ENCODE measurements at regions of chr3 and their contacts with region 1.

Region 1: DNA sequence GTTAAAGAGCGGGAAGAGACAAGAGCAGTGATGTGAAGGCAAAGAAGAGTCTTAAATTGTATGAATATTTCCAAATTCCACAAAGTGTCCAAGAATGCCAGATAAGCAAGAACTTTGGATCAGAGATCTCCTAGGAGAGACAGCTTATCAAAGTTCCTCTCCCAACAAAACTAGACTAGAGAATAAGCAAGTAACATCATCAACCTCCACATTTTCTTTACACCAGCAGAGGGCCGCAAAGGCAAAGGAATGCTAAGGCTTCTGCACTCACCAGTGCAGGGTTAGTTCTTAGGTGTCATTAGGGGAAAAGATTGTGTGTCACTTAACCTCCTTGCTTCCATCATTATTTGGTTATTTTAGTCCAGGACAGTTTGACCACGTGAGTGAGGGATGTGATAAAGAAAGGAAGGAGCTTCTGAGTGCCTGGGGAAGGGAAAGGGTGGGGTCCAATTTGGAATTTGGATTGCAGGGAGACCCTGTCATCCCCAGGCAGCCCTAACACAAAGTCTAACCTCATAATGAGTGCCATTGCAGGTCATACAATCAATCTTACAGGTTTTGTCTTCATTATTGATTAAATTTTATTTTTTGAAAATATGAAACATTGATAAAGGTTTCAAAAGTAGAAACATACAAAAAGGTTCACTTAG is 7.5 kb upstream of the CMTM6 start:
- DNase-seq: peak; percentile 32
- H3K4me3 ChIP-seq: no peak overlapping the region
- H3K27ac ChIP-seq: no peak overlapping the region
- H3K27me3 ChIP-seq: no peaks in the 10 kb centered on the region
- CTCF ChIP-seq: peak; percentile 81

Region 2: GRCh38 chr3:32045091-32045964 is 464.9 kb before region 1 on chr3:
- CTCF ChIA-PET with region 1: no interaction called
- POLR2A ChIA-PET with region 1: no interaction called
- DNase-seq: peak; percentile 78
- H3K4me3 ChIP-seq: peak overlapping the region; percentile 24
- H3K27ac ChIP-seq: peak overlapping the region; percentile 81
- H3K27me3 ChIP-seq: peaks cover 3% of the 10 kb centered on the region
- CTCF ChIP-seq: peak; percentile 19; the same call in 1 of the 2 replicates

Region 3: GRCh38 chr3:32498252-32498651 is 11.9 kb before region 1 on chr3:
- CTCF ChIA-PET with region 1: interaction called, 11 read pairs
- POLR2A ChIA-PET with region 1: no interaction called
- DNase-seq: no peak
- H3K4me3 ChIP-seq: no peak overlapping the region
- H3K27ac ChIP-seq: no peak overlapping the region
- H3K27me3 ChIP-seq: no peaks in the 10 kb centered on the region
- CTCF ChIP-seq: no peak

Region 4: GRCh38 chr3:32522682-32523081 is 12.5 kb after region 1 on chr3:
- CTCF ChIA-PET with region 1: interaction called, 11 read pairs
- POLR2A ChIA-PET with region 1: interaction called, 4 read pairs
- DNase-seq: no peak
- H3K4me3 ChIP-seq: no peak overlapping the region
- H3K27ac ChIP-seq: no peak overlapping the region
- H3K27me3 ChIP-seq: no peaks in the 10 kb centered on the region
- CTCF ChIP-seq: no peak

Region 5: DNA sequence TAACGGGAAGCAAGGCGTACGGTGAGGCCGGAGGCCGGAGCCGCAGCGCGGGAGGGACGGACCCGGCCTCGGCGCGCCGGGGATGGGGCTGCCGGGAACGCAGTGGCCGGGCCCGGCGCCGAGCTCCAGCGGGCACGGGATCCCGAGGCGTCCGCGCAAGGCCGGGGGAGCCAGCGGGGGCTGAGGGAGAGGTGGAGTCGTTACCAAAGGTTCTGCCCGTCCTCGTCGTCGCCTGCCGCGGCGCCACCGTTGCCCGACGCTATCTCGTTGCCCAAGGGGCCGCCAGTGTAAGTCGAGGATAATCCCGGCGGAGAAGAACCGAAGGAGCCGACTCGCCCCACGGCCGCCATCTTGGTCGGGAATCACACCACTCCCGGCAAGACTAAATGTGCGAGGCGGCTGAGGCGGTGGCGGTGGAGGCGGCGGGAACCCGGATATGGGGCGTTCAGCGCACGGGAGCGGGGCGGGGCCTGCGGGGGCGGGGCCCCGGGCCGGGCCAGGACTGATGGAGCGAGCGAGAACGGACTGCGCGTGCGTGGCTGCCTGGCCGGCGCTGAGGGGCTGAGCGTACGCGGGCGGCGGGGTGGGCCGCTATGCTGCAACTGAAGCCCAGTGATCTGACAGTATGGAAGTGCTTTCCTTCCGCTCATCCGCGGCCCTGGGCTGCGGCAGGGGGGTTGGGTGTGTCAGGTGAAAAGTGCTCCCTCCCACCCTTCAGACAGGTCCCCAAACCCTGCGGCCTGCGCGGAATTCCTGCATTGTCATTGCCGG is 60.4 kb after region 1 on chr3 and contains the start of gene DYNC1LI1:
- CTCF ChIA-PET with region 1: interaction called, 13 read pairs
- POLR2A ChIA-PET with region 1: no interaction called
- DNase-seq: peak; percentile 68
- H3K4me3 ChIP-seq: peak within 1 kb of the TSS; percentile 90
- H3K27ac ChIP-seq: peak within 1 kb of the TSS; percentile 93
- H3K27me3 ChIP-seq: no peaks in the 10 kb centered on the region
- CTCF ChIP-seq: no peak
- polyA plus RNA-seq, gene DYNC1LI1: 33.2 and 53.4 TPM in 2 replicates

Region 6: GRCh38 chr3:32655167-32655566 is 145.0 kb after region 1 on chr3:
- CTCF ChIA-PET with region 1: interaction called, 10 read pairs
- POLR2A ChIA-PET with region 1: no interaction called
- DNase-seq: no peak
- H3K4me3 ChIP-seq: no peak overlapping the region
- H3K27ac ChIP-seq: no peak overlapping the region
- H3K27me3 ChIP-seq: peaks cover 9% of the 10 kb centered on the region
- CTCF ChIP-seq: no peak

Region 7: DNA sequence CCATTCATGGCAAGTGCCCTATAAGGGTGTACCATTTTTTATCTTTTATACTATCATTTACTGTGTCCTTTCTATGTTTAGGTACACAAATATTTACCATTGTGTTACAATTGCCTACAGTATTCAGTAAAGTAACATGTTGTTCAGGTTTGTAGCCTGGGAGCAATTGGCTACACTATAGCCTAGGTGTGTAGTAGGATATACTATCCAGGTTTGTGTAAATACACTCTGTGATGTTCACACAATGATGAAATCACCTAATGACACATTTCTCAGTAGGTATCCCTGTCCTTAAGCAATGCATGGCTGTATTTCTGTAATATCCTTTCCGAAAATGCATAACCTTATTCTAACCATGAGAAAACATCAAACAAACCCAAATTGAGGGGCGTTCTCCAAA is 156.9 kb after region 1 on chr3:
- CTCF ChIA-PET with region 1: interaction called, 32 read pairs
- POLR2A ChIA-PET with region 1: no interaction called
- DNase-seq: no peak
- H3K4me3 ChIP-seq: no peak overlapping the region
- H3K27ac ChIP-seq: no peak overlapping the region
- H3K27me3 ChIP-seq: peaks cover 7% of the 10 kb centered on the region
- CTCF ChIP-seq: no peak

Measured in AG04450 (cell line).